Naive thymus-derived CD8-positive, alpha-beta T cell (primary cell): ENCODE measurements at regions of chr22 and their contacts with region 1.

Region 1: GRCh38 chr22:20319745-20320658 is at the start of gene DGCR6L:
- DNase-seq: peak; percentile 93 to 97 (median 95)
- ATAC-seq: peak; percentile 81 to 84
- H3K4me3 Mint-ChIP-seq: peak within 1 kb of the TSS; percentile 87 to 94 (median 93)
- H3K27ac Mint-ChIP-seq: peak within 1 kb of the TSS; percentile 73 to 95 (median 90)
- H3K4me1 Mint-ChIP-seq: peaks cover 27 to 66% (median 62%) of the 10 kb centered on the region in 4 donors
- H3K27me3 Mint-ChIP-seq: no peaks in the 10 kb centered on the region
- polyA plus RNA-seq, gene DGCR6L: 104 to 144 (median 124) TPM

Region 2: GRCh38 chr22:20298803-20299735 is 20.9 kb before region 1 on chr22:
- POLR2A ChIA-PET with region 1: interaction called, 10 read pairs
- DNase-seq: peak; percentile 78 to 94 (median 91)
- ATAC-seq: peak; percentile 86
- H3K4me3 Mint-ChIP-seq: peak overlapping the region; percentile 71 to 91 (median 82)
- H3K27ac Mint-ChIP-seq: peak overlapping the region in 5 of 10 donors; percentile 63 to 85 (median 84)
- H3K4me1 Mint-ChIP-seq: peaks cover 6 to 16% (median 11%) of the 10 kb centered on the region in 4 donors
- H3K27me3 Mint-ChIP-seq: peaks cover 0 to 4% (median 0%) of the 10 kb centered on the region in 5 donors

Region 3: DNA sequence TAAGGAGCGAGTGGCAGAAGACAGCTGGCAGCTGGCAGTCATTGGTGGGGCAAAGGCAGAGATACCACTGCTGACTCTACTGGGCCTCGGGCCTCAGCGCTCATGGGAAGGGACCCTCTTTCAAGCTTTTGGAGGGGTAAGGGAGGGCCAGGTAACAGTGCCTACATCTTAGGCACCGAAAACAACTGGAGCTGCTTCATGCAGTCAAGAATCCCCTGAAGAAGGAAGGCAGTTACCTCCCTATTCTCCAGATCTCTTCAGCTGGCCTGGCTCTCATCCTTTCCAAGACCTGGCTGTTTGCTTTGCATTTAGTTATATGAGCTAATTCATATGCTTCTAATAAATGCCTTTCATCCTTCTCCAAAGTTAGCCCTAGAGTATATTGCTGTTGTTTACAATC is 58.1 kb after region 1 on chr22:
- POLR2A ChIA-PET with region 1: no interaction called
- DNase-seq: no peak
- ATAC-seq: no peak
- H3K4me3 Mint-ChIP-seq: no peak overlapping the region
- H3K27ac Mint-ChIP-seq: no peak overlapping the region
- H3K4me1 Mint-ChIP-seq: no peaks in the 10 kb centered on the region
- H3K27me3 Mint-ChIP-seq: peaks cover 0 to 1% (median 0%) of the 10 kb centered on the region in 5 donors

Region 4: DNA sequence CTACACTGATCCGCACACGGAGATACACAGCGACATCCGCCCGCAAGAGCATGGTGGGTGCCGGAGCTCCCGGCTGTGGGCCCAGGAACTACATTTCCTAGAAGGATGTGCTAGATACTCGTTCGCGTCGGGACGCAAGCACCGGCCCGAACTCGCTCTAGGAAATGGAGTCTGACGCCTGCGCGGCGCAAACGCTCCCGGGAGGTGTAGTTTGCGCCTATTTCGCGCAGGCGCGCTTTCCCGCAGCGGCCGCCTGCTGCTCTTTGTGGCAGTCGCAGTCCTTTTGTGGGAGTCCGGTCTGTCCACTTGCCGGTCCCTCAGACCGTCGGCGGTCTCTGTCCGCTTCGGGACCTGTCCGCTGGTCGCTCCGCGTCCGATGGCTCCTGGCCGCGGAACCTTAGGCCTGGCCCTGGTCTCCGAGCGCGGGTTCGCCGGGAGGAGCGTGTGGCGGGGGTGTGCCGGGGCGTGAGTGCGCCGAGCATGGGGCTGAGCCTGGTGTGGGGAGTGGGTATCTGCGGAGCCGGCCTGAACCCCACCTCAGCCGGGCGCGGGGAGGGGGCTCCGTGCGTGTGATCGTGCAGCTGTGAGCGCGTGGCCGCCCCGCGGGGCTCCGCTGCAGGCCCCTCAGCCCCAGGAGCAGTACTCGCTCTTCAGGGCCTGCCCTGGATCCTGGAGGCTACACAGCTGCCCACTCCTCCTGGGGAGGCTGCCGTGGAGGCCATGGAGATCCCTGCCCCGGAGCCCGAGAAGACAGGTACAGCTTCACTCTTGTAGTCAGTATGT is 74.1 kb after region 1 on chr22 and contains the start of gene ZNF74:
- POLR2A ChIA-PET with region 1: interaction called, 20 read pairs
- DNase-seq: peak; percentile 74 to 92 (median 82)
- ATAC-seq: peak; percentile 96 to 97
- H3K4me3 Mint-ChIP-seq: peak within 1 kb of the TSS; percentile 82 to 93 (median 91)
- H3K27ac Mint-ChIP-seq: peak within 1 kb of the TSS; percentile 86 to 99 (median 96)
- H3K4me1 Mint-ChIP-seq: peaks cover 21 to 48% (median 43%) of the 10 kb centered on the region in 4 donors
- H3K27me3 Mint-ChIP-seq: no peaks in the 10 kb centered on the region
- polyA plus RNA-seq, gene ZNF74: 6.7 to 10.7 (median 8.2) TPM